Mammary epithelial cell (primary cell): ENCODE measurements at regions of chr9 and their contacts with region 1.

Region 1: GRCh38 chr9:115164511-115164974 is 46.6 kb upstream of the TNC start:
- DNase-seq: peak; percentile 61
- H3K4me3 ChIP-seq: no peak overlapping the region
- H3K27ac ChIP-seq: peak overlapping the region; percentile 26
- H3K4me1 ChIP-seq: peaks cover 28% of the 10 kb centered on the region
- H3K27me3 ChIP-seq: no peaks in the 10 kb centered on the region
- CTCF ChIP-seq: no peak

Region 2: DNA sequence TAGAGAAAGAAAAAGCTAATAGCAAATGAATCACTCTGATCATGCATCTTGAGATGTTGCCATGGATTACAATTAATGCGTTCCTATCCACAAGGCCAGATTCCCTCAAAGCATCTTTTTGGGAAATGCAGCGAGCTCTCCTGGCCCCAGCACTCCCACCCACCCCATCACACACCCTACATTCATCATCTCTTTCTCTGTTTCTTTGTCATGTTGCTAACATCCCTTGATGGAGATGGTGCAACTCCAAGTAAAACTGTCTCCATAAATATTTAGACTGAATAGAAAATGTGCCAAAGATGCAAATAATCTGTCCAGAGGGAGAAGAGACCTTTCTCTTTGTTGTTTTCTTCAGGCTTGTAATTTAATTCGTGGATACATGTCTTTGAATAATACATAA is 15.8 kb before region 1 on chr9:
- CTCF ChIA-PET with region 1: no interaction called
- dilution Hi-C with region 1: no loop called
- in situ Hi-C with region 1: no loop called
- intact Hi-C with region 1: loop called (anchors 1 kb)
- DNase-seq: no peak
- H3K4me3 ChIP-seq: no peak overlapping the region
- H3K27ac ChIP-seq: no peak overlapping the region
- H3K4me1 ChIP-seq: no peaks in the 10 kb centered on the region
- H3K27me3 ChIP-seq: no peaks in the 10 kb centered on the region
- CTCF ChIP-seq: no peak